Posterior vena cava (tissue), 2 donors: ENCODE measurements at regions of chr20 and their contacts with region 1.

Region 1: GRCh38 chr20:63587776-63588591 is 13.9 kb upstream of the HELZ2 start:
- DNase-seq: no peak

Region 2: GRCh38 chr20:63119121-63119750 is 468.7 kb before region 1 on chr20:
- intact Hi-C with region 1: loop called in 1 of 2 experiments (anchors 2 kb)
- DNase-seq: peak; percentile 75

Region 3: DNA sequence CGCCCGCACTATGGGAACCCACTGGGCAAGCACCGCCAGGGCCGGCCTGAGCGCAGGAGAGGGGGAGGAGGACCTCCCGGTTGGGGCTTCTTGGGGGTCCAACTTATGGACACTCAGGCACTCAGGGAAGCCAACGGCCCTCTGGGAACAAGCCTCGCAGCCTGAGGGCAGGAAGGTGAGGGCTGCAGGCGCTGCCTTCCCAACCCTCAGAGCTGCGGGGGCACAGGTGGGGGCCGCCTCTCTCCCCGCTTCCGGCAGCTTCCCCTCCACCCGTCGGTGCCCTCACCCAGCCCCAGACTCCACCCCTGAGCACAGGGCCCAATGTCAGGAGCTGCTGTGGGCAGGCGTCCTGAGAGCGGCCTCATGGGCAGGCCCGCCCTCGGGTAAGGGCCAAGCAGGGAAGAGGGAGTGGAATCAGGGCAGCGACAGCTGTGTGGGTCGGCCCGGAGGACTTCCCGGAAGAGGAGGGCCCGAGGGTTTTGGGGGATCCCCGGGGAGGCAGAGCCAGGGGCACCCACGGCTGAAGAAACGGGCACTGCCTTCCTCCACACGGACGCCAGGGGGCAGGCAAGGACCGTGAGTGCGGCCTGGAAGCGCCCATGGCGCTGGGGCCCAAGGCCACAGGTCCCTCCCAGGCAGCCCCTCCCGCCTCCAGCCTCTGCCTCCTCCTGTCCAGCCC is 50.3 kb before region 1 on chr20:
- intact Hi-C with region 1: no loop called
- DNase-seq: peak; percentile 96

Region 4: GRCh38 chr20:64044484-64045247 is 456.7 kb after region 1 on chr20:
- intact Hi-C with region 1: loop called in 1 of 2 experiments (anchors 5 kb)
- DNase-seq: no peak